Activated B cell treated with CpG ODN at 0.5 μM for 24 hours (primary cell): ENCODE measurements at regions of chr7 and their contacts with region 1.

Region 1: GRCh38 chr7:8217200-8218068 is 44.5 kb downstream of the ICA1 start:
- DNase-seq: no peak
- ATAC-seq: no peak
- H3K4me3 Mint-ChIP-seq: no peak overlapping the region
- H3K27ac Mint-ChIP-seq: no peak overlapping the region
- H3K4me1 Mint-ChIP-seq: no peaks in the 10 kb centered on the region
- H3K27me3 Mint-ChIP-seq: no peaks in the 10 kb centered on the region
- CTCF ChIP-seq: no peak

Region 2: DNA sequence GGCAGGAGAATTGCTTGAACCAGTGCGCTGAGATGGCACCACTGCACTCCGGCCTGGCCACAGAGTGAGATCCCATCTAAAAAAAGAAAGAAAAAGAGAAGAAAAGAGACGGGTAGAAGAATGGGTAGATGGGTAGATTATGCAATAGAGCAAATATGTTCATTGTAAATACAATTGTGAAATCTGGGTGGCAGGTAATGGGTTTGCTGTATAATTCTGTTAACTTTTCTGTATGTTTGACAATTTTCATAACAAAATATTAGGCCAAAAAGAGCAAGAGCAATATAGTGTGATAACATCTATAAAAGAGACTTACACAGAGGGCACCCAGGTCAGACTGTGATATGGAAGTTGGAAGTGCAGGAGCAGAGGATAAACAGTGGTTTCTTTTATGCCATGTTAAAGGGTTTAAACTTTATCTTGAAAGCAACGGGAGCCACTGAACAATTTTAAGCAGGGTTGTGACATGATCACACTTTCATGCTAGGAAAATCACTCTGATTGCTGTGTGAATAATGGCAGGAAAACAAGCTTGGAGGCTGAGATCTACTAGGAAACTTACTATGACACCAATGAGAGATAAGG is 675.1 kb before region 1 on chr7:
- CTCF ChIA-PET with region 1: interaction called, 7 read pairs
- POLR2A ChIA-PET with region 1: no interaction called
- intact Hi-C with region 1: loop called (anchors 2 kb)
- DNase-seq: no peak
- ATAC-seq: no peak
- H3K4me3 Mint-ChIP-seq: no peak overlapping the region
- H3K27ac Mint-ChIP-seq: no peak overlapping the region
- H3K4me1 Mint-ChIP-seq: peaks cover 2% of the 10 kb centered on the region
- H3K27me3 Mint-ChIP-seq: peaks cover 6% of the 10 kb centered on the region
- CTCF ChIP-seq: no peak

Region 3: GRCh38 chr7:8481752-8482446 is 264.5 kb after region 1 on chr7:
- CTCF ChIA-PET with region 1: no interaction called
- POLR2A ChIA-PET with region 1: no interaction called
- intact Hi-C with region 1: no loop called
- DNase-seq: no peak
- ATAC-seq: no peak
- H3K4me3 Mint-ChIP-seq: no peak overlapping the region
- H3K27ac Mint-ChIP-seq: no peak overlapping the region
- H3K4me1 Mint-ChIP-seq: no peaks in the 10 kb centered on the region
- H3K27me3 Mint-ChIP-seq: no peaks in the 10 kb centered on the region
- CTCF ChIP-seq: no peak